Activated T-helper 1 cell treated with anti-CD3 and anti-CD28 coated beads, Interleukin-12 subunit alpha, Interleukin-12 subunit beta, Interleukin-2, Interleukin-4 antibody, amounts not matched to agents 30 ng/mL and 10 ng/mL and 1 ng/mL, durations not matched to agents 14 hours and 24 hours and 36 hours (primary cell): ENCODE measurements at regions of chr22 and their contacts with region 1.

Region 1: DNA sequence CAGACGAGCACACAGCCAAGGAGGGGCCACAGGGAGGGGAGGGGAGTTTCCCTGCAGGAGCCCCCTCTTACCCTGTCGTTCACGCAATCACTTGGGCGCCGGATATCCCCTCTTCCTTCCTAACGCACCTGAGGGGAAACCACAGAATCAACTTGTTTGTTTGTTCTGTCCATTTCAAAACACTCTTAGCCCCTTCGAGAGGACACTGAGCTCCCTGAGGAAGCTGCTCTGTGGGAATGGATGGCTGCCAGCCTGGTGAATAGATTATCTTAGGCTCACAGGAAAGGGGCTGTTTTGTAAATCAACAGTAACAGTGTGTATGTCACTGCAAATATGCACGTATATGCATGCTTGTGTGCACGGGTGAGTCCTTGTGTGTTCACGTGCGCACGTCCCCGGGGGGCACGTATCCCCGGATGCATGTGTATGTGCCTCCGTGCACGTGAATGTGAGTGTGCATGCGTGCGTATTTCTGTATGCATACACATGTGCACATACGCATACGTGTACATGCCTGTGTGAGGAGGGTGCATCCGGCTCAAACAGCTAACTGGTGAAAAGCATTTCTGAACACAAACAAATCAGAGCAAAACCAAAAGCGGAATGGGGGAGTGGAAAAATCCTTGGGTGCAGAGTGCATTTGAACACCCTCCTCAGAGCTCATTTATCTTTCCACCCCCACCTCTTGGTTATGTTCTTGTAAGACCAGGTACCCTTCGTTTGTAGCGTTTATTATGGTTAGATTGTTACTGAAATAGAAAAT is 7.2 kb downstream of the ARSA start:
- DNase-seq: peak; percentile 72
- H3K4me3 Mint-ChIP-seq: peak overlapping the region; percentile 85
- H3K27ac Mint-ChIP-seq: peak overlapping the region; percentile 98
- H3K4me1 Mint-ChIP-seq: peaks cover 37% of the 10 kb centered on the region
- H3K27me3 Mint-ChIP-seq: no peaks in the 10 kb centered on the region

Region 2: GRCh38 chr22:50148991-50149721 is 471.6 kb before region 1 on chr22:
- intact Hi-C with region 1: no loop called
- DNase-seq: peak; percentile 61
- H3K4me3 Mint-ChIP-seq: no peak overlapping the region
- H3K27ac Mint-ChIP-seq: no peak overlapping the region
- H3K4me1 Mint-ChIP-seq: peaks cover 8% of the 10 kb centered on the region
- H3K27me3 Mint-ChIP-seq: no peaks in the 10 kb centered on the region

Region 3: GRCh38 chr22:50244420-50245213 is 376.2 kb before region 1 on chr22 and contains the start of gene TUBGCP6:
- intact Hi-C with region 1: loop called (anchors 2 kb)
- DNase-seq: peak; percentile 93
- H3K4me3 Mint-ChIP-seq: peak within 1 kb of the TSS; percentile 99
- H3K27ac Mint-ChIP-seq: peak within 1 kb of the TSS; percentile 100
- H3K4me1 Mint-ChIP-seq: peaks cover 26% of the 10 kb centered on the region
- H3K27me3 Mint-ChIP-seq: peaks cover 2% of the 10 kb centered on the region
- total RNA-seq, gene TUBGCP6: 52.1 and 54.6 TPM in 2 replicates

Region 4: GRCh38 chr22:50271519-50271970 is 349.2 kb before region 1 on chr22:
- intact Hi-C with region 1: loop called (anchors 2 kb)
- DNase-seq: peak; percentile 55
- H3K4me3 Mint-ChIP-seq: no peak overlapping the region
- H3K27ac Mint-ChIP-seq: no peak overlapping the region
- H3K4me1 Mint-ChIP-seq: peaks cover 10% of the 10 kb centered on the region
- H3K27me3 Mint-ChIP-seq: peaks cover 8% of the 10 kb centered on the region

Region 5: GRCh38 chr22:50474668-50475492 is 145.9 kb before region 1 on chr22 and contains the start of gene SBF1:
- intact Hi-C with region 1: loop called (anchors 1 kb)
- DNase-seq: peak; percentile 87
- H3K4me3 Mint-ChIP-seq: peak within 1 kb of the TSS; percentile 87
- H3K27ac Mint-ChIP-seq: peak within 1 kb of the TSS; percentile 74
- H3K4me1 Mint-ChIP-seq: peaks cover 39% of the 10 kb centered on the region
- H3K27me3 Mint-ChIP-seq: peaks cover 12% of the 10 kb centered on the region
- total RNA-seq, gene SBF1: 113 and 116 TPM in 2 replicates

Region 6: GRCh38 chr22:50525390-50526068 is 95.2 kb before region 1 on chr22 and contains the start of gene SCO2:
- intact Hi-C with region 1: loop called (anchors 1 kb)
- DNase-seq: peak; percentile 97
- H3K4me3 Mint-ChIP-seq: peak within 1 kb of the TSS; percentile 94
- H3K27ac Mint-ChIP-seq: peak within 1 kb of the TSS; percentile 88
- H3K4me1 Mint-ChIP-seq: peaks cover 34% of the 10 kb centered on the region
- H3K27me3 Mint-ChIP-seq: no peaks in the 10 kb centered on the region
- total RNA-seq, gene SCO2: 8.7 and 14.8 TPM in 2 replicates

Region 7: DNA sequence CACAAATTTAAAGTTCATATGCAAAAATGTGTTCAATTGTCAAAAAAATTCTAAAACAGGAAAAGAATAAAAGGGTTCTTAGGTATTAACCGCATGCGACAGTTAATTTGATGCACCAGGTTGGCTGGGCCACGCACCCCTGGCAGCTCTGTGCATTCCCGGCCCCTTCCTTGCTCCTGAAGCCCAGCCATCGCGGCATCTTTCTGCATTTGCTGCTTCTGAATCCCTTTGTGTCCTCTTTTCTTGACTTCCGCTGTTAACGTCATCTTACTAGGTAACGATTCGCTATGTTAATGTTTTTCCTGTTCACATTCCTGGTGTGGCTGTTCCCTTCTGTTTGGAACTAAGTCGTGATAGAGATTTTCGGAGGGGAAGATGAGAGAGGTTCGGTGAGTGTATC is 83.0 kb before region 1 on chr22:
- intact Hi-C with region 1: loop called (anchors 2 kb)
- DNase-seq: no peak
- H3K4me3 Mint-ChIP-seq: peak overlapping the region; percentile 41
- H3K27ac Mint-ChIP-seq: peak overlapping the region; percentile 97
- H3K4me1 Mint-ChIP-seq: peaks cover 84% of the 10 kb centered on the region
- H3K27me3 Mint-ChIP-seq: no peaks in the 10 kb centered on the region

Region 8: GRCh38 chr22:50691521-50691920 is 70.7 kb after region 1 on chr22:
- intact Hi-C with region 1: loop called (anchors 2 kb)
- DNase-seq: peak; percentile 17
- H3K4me3 Mint-ChIP-seq: no peak overlapping the region
- H3K27ac Mint-ChIP-seq: no peak overlapping the region
- H3K4me1 Mint-ChIP-seq: peaks cover 7% of the 10 kb centered on the region
- H3K27me3 Mint-ChIP-seq: peaks cover 11% of the 10 kb centered on the region